ENCODE measurements at regions of chr18 and their contacts with region 1.

Region 1: DNA sequence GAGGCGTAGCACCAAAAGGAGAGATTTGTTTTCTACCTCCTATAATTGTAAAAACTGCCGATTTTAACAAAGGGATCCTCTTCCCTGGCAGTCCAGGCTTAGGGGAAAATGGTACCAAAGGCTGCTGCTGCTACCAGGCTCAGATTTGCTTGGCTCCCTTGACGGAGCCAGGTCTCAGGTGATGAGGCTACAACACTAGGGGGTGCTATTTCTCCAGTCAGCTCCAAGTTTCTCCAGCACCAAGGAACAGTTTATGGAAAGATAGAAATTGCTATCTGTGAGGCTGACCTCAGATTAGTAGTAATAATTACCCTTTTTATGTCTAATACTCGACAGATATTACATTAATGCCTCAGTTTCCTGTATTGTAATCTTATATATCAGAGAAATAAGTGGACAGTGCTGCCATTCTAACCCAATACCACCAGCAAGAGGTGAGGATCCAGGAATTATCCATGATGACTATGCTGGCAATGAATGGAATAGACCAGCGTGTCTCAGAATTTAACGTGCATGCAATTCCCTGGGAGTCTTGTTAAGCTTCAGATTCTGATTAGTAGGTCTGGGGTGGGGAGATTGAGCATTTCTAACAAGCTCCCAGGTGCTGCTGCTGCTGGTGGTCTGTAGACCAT is 111.3 kb downstream of the ESCO1 start:
- DNase-seq: peak; percentile 40
- ATAC-seq: peak; percentile 94
- H3K4me3 ChIP-seq: no peak overlapping the region
- H3K27ac ChIP-seq: no peak overlapping the region
- H3K4me1 ChIP-seq: peaks cover 4 to 9% of the 10 kb centered on the region in 2 experiments; a peak in 3 of 4 replicates
- H3K27me3 ChIP-seq: no peaks in the 10 kb centered on the region
- CTCF ChIP-seq: peak; percentile 47 to 90 (median 80); a peak in 5 of 6 replicates
- POLR2A ChIP-seq: no peak
- RAD21 ChIP-seq: peak; percentile 82

Region 2: GRCh38 chr18:21557607-21558253 is 68.5 kb after region 1 on chr18:
- CTCF ChIA-PET with region 1: no interaction called
- POLR2A ChIA-PET with region 1: no interaction called
- RAD21 ChIA-PET with region 1: no interaction called
- intact Hi-C with region 1: loop called (anchors 10 kb)
- DNase-seq: no peak
- ATAC-seq: no peak
- H3K4me3 ChIP-seq: no peak overlapping the region
- H3K27ac ChIP-seq: no peak overlapping the region
- H3K4me1 ChIP-seq: peaks cover 0 to 3% of the 10 kb centered on the region in 2 experiments; a peak in 2 of 4 replicates
- H3K27me3 ChIP-seq: no peaks in the 10 kb centered on the region
- CTCF ChIP-seq: no peak
- POLR2A ChIP-seq: no peak
- RAD21 ChIP-seq: no peak

Region 3: DNA sequence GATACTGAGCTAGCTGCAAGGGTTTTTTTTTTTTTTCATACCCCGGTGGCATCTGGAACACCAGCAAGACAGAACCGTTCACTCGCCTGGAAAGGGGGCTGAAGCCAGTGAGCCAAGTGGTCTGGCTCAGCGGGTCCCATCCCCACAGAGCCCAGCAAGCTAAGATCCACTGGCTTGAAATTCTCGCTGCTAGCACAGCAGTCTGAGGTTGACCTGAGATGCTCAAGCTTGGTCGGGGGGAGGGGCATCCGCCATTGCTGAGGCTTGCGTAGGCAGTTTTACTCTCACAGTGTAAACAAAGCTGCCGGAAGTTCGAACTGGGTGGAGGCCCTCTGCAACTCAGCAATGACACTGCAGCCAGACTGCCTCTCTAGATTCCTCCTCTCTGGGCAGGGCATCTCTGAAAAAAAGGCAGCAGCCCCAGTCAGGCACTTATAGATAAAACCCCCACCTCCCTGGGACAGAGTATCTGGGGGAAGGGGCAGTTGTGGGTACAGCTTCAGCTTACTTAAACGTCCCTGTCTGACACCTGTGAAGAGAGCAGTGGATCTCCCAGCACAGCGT is 246.3 kb after region 1 on chr18:
- CTCF ChIA-PET with region 1: no interaction called
- POLR2A ChIA-PET with region 1: no interaction called
- RAD21 ChIA-PET with region 1: no interaction called
- intact Hi-C with region 1: no loop called
- DNase-seq: no peak
- ATAC-seq: no peak
- H3K4me3 ChIP-seq: no peak overlapping the region
- H3K27ac ChIP-seq: no peak overlapping the region
- H3K4me1 ChIP-seq: peaks cover 5 to 9% of the 10 kb centered on the region in 2 experiments
- H3K27me3 ChIP-seq: no peaks in the 10 kb centered on the region
- CTCF ChIP-seq: no peak
- POLR2A ChIP-seq: no peak
- RAD21 ChIP-seq: no peak

Region 4: DNA sequence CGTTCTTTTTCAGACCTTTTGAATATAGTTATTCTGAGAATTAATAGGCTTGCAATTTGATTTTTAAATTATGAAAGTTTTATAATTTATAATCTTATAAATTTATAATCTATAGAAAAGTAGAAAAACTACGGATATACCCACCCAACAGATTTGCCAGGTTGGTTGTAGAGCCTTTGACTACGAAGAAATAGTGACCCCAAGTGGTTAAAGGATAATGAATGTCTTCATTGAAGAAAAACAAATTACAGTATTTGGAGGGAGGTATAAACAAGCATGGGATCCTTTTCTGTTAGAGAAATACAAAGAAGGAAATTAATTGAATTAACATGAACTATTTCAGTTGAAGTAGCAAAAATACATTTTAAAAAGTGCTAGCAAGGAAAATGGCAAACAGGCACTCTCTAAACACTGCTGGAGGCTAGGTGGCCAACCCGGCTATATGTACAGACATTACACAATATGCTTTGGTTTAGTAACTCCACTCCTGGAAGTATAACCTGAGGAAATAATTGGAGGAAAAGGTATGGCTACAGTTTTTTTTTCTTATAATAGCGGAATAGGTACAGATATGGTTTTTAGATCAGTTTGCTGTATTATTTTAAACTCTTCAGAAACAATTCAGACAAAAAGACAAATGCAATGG is 362.2 kb after region 1 on chr18:
- CTCF ChIA-PET with region 1: no interaction called
- POLR2A ChIA-PET with region 1: no interaction called
- RAD21 ChIA-PET with region 1: no interaction called
- intact Hi-C with region 1: loop called (anchors 5 kb)
- DNase-seq: no peak
- ATAC-seq: no peak; the same call in 1 of the 2 replicates
- H3K4me3 ChIP-seq: no peak overlapping the region
- H3K27ac ChIP-seq: no peak overlapping the region
- H3K4me1 ChIP-seq: no peaks in the 10 kb centered on the region
- H3K27me3 ChIP-seq: no peaks in the 10 kb centered on the region
- CTCF ChIP-seq: peak; percentile 19 to 28 (median 24); a peak in 2 of 6 replicates
- POLR2A ChIP-seq: no peak
- RAD21 ChIP-seq: peak; percentile 47

Region 5: DNA sequence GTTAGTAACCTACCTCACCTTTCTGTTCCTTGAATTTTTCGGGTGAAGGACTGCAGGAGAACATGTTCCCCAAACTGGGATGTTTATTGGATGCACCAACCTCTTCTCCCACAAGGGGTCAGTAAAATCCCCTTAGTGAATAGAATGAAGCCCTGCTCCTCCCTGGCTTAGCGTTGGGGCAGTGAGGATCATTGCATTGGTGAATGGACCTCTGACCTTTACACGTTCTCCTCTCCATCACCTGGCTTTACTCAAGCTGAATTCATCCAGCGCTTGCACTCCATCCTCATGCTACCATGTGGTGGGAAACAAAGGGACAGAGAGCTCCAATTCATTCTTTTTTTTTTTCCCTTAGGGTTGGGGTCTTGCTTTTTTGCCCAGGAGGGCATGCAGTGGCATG is 408.6 kb after region 1 on chr18:
- CTCF ChIA-PET with region 1: no interaction called
- POLR2A ChIA-PET with region 1: no interaction called
- RAD21 ChIA-PET with region 1: no interaction called
- intact Hi-C with region 1: loop called (anchors 5 kb)
- DNase-seq: peak; percentile 41
- ATAC-seq: peak; percentile 95
- H3K4me3 ChIP-seq: no peak overlapping the region
- H3K27ac ChIP-seq: no peak overlapping the region
- H3K4me1 ChIP-seq: peaks cover 0 to 4% of the 10 kb centered on the region in 2 experiments; a peak in 1 of 4 replicates
- H3K27me3 ChIP-seq: no peaks in the 10 kb centered on the region
- CTCF ChIP-seq: peak; percentile 45 to 78 (median 75); a peak in 5 of 6 replicates
- POLR2A ChIP-seq: no peak
- RAD21 ChIP-seq: peak; percentile 72

Measured in HCT116 (cell line).